ENCODE measurements at regions of chr6 and their contacts with region 1.

Region 1: GRCh38 chr6:26270903-26271667 is 93.9 kb upstream of the BTN3A2 start:
- DNase-seq: peak; percentile 85 to 94 (median 92)
- H3K4me3 ChIP-seq: peak overlapping the region; percentile 66 to 96 (median 81)
- H3K27ac ChIP-seq: peak overlapping the region in 1 of 2 experiments; percentile 70
- H3K4me1 ChIP-seq: peaks cover 12 to 46% (median 39%) of the 10 kb centered on the region in 4 experiments
- H3K27me3 ChIP-seq: no peaks in the 10 kb centered on the region

Region 2: GRCh38 chr6:26196846-26197648 is 74.0 kb before region 1 on chr6:
- CTCF ChIA-PET with region 1: interaction called, 11 read pairs
- POLR2A ChIA-PET with region 1: interaction called, 12 read pairs
- DNase-seq: peak; percentile 93 to 97 (median 96)
- H3K4me3 ChIP-seq: peak overlapping the region; percentile 50 to 99 (median 96)
- H3K27ac ChIP-seq: peak overlapping the region; percentile 46 to 91
- H3K4me1 ChIP-seq: peaks cover 15 to 46% (median 36%) of the 10 kb centered on the region in 4 experiments
- H3K27me3 ChIP-seq: no peaks in the 10 kb centered on the region

Region 3: DNA sequence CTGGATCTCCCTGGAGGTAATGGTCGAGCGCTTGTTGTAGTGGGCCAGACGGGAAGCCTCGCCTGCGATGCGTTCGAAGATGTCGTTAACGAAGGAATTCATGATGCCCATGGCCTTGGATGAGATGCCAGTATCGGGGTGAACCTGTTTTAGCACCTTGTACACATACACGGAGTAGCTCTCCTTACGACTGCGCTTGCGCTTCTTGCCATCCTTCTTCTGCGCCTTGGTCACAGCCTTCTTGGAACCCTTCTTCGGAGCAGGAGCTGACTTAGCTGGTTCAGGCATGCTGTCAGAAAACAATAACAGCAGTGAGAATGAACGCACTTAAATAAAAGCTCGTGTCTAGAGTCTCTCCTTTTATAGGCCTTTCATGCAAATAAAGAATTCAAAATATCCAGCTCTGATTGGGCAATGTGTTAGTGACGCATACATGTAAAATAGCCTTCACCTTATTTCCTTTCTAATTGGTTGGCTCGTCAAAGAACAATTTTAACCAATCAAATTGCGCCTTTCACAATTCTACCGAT is 54.7 kb before region 1 on chr6:
- CTCF ChIA-PET with region 1: interaction called, 14 read pairs
- POLR2A ChIA-PET with region 1: interaction called, 35 read pairs
- DNase-seq: peak; percentile 97 to 99 (median 99)
- H3K4me3 ChIP-seq: peak overlapping the region; percentile 37 to 92 (median 79)
- H3K27ac ChIP-seq: peak overlapping the region; percentile 67 to 89
- H3K4me1 ChIP-seq: peaks cover 13 to 52% (median 27%) of the 10 kb centered on the region in 4 experiments
- H3K27me3 ChIP-seq: no peaks in the 10 kb centered on the region

Region 4: DNA sequence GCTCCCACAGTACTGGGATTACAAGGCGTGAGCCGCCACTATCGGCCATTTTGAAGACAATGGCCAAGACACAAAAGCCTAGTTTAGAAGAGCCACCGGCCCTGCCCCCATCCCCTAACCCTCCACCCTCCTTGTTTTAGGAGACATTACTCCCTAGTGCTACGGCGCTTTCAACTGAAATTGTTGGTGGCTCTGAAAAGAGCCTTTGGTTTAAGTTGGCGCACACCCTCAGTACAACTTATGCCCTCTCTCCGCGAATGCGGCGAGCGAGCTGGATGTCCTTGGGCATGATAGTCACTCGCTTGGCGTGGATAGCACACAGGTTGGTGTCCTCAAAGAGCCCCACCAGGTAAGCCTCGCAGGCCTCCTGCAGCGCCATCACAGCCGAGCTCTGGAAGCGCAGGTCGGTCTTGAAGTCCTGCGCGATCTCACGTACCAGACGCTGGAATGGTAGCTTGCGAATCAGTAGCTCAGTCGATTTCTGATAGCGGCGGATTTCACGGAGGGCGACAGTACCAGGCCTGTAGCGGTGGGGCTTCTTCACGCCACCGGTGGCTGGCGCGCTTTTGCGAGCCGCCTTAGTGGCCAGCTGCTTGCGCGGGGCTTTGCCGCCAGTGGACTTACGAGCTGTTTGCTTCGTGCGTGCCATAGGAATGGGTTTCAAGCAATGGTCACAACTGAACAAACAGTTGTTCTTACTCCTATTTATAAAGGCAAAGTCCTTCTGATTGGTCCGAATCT is 21.0 kb before region 1 on chr6:
- CTCF ChIA-PET with region 1: interaction called, 50 read pairs
- POLR2A ChIA-PET with region 1: interaction called, 5 read pairs
- DNase-seq: peak; percentile 85 to 92 (median 89)
- H3K4me3 ChIP-seq: peak overlapping the region; percentile 72 to 96 (median 82)
- H3K27ac ChIP-seq: peak overlapping the region; percentile 80 to 94
- H3K4me1 ChIP-seq: peaks cover 9 to 34% (median 20%) of the 10 kb centered on the region in 4 experiments
- H3K27me3 ChIP-seq: no peaks in the 10 kb centered on the region

Region 5: DNA sequence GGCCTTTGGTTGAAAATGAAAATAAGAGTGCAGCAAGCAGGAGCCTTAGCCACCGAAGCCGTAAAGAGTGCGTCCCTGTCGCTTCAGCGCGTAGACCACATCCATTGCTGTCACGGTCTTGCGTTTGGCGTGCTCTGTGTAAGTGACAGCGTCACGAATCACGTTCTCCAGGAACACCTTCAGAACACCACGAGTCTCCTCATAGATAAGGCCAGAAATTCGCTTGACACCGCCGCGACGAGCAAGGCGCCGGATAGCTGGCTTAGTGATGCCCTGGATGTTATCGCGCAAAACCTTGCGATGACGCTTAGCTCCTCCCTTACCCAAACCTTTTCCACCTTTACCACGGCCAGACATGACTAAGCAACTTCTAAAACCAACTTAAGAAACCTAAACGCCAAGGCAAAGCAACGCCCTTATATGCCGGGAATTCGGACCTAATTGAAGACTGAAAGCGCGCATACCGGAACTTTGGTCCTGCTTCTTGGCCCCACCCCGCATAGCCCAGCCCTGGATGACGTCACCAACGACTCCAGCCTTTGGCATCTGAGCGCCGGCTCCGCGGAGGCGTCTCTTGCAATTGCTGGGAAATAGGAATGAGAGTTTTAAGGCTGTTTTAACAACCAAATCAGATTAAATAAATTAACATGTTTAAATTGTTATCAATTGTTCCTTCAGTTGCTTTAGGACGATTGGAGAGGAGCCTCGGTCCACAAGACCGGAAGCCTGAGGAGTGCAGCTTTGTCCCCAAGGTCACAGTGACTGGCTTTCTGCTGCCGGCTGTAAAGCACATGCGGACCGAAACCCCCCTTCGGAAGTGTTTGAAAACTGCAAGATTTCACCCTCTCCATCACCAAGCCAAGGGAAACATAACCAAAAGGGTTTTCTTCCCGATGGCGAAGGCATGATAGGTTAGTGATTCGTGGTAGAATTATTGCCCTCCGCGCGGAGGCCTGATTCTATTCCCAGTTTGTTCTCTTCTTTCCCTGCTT is 14.4 kb after region 1 on chr6:
- CTCF ChIA-PET with region 1: interaction called, 45 read pairs
- POLR2A ChIA-PET with region 1: interaction called, 24 read pairs
- DNase-seq: peak; percentile 99 to 100 (median 100)
- H3K4me3 ChIP-seq: peak overlapping the region; percentile 47 to 96 (median 79)
- H3K27ac ChIP-seq: peak overlapping the region; percentile 80 to 94
- H3K4me1 ChIP-seq: peaks cover 3 to 26% (median 21%) of the 10 kb centered on the region in 4 experiments
- H3K27me3 ChIP-seq: no peaks in the 10 kb centered on the region

Region 6: DNA sequence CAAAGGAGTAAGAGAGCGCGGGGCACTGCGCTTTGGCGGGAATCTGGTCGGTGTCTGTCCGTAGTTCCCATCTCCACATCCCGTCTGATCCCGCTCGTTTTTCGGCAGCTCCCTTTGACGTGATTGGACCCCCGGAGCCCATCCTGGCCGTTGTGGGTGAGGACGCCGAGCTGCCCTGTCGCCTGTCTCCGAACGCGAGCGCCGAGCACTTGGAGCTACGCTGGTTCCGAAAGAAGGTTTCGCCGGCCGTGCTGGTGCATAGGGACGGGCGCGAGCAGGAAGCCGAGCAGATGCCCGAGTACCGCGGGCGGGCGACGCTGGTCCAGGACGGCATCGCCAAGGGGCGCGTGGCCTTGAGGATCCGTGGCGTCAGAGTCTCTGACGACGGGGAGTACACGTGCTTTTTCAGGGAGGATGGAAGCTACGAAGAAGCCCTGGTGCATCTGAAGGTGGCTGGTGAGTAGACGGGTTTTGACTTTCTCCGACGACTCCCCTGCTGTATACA is 230.4 kb after region 1 on chr6:
- CTCF ChIA-PET with region 1: no interaction called
- POLR2A ChIA-PET with region 1: no interaction called
- DNase-seq: peak in 2 of 3 donors; percentile 45 to 60
- H3K4me3 ChIP-seq: peak overlapping the region in 6 of 7 experiments; percentile 0 to 68 (median 42)
- H3K27ac ChIP-seq: no peak overlapping the region
- H3K4me1 ChIP-seq: peaks cover 3 to 21% (median 14%) of the 10 kb centered on the region in 4 experiments
- H3K27me3 ChIP-seq: peaks cover 7 to 27% (median 13%) of the 10 kb centered on the region in 5 experiments

Region 7: GRCh38 chr6:26553635-26554446 is 282.8 kb after region 1 on chr6:
- CTCF ChIA-PET with region 1: no interaction called
- POLR2A ChIA-PET with region 1: no interaction called
- DNase-seq: peak; percentile 85 to 93 (median 92)
- H3K4me3 ChIP-seq: peak overlapping the region in 6 of 7 experiments; percentile 75 to 100 (median 90)
- H3K27ac ChIP-seq: peak overlapping the region in 1 of 2 experiments; percentile 78
- H3K4me1 ChIP-seq: peaks cover 10 to 22% (median 20%) of the 10 kb centered on the region in 4 experiments
- H3K27me3 ChIP-seq: no peaks in the 10 kb centered on the region

Measured in common myeloid progenitor, CD34-positive (primary cell).